ENCODE measurements at regions of chr3 and their contacts with region 1.

Region 1: GRCh38 chr3:99753268-99753975 is 64.2 kb upstream of the CMSS1 start:
- DNase-seq: no peak
- ATAC-seq: peak; percentile 77 to 78
- H3K4me3 ChIP-seq: no peak overlapping the region
- H3K27ac ChIP-seq: no peak overlapping the region
- H3K4me1 ChIP-seq: no peaks in the 10 kb centered on the region
- H3K27me3 ChIP-seq: no peaks in the 10 kb centered on the region
- CTCF ChIP-seq: peak; percentile 66

Region 2: GRCh38 chr3:99023590-99024192 is 729.7 kb before region 1 on chr3:
- intact Hi-C with region 1: loop called (anchors 10 kb)
- DNase-seq: no peak
- ATAC-seq: peak in 1 of 2 donors; percentile 49
- H3K4me3 ChIP-seq: no peak overlapping the region
- H3K27ac ChIP-seq: no peak overlapping the region
- H3K4me1 ChIP-seq: no peaks in the 10 kb centered on the region
- H3K27me3 ChIP-seq: no peaks in the 10 kb centered on the region
- CTCF ChIP-seq: peak; percentile 60

Region 3: DNA sequence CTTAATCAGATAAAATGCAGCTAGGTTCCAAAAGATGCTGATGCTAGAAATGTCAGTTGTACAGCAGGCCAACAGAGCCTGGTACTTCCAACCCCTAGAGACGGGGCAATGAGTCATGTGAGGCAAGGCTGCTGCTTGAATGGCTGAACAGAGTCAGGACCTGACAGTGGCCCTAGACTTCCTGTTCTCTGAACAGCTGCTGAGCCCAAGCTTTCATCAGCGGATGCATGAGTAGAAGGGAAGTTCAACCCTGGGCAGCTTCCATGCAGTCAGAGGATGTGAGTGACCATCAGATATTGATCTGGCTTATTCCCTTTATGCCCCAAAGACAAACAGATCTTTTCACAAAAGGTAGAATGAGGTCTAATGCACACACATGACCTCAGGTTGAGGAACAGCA is 398.0 kb before region 1 on chr3:
- intact Hi-C with region 1: no loop called
- DNase-seq: no peak
- ATAC-seq: no peak
- H3K4me3 ChIP-seq: no peak overlapping the region
- H3K27ac ChIP-seq: no peak overlapping the region
- H3K4me1 ChIP-seq: no peaks in the 10 kb centered on the region
- H3K27me3 ChIP-seq: no peaks in the 10 kb centered on the region
- CTCF ChIP-seq: no peak

Region 4: GRCh38 chr3:100136921-100137320 is 383.5 kb after region 1 on chr3:
- intact Hi-C with region 1: no loop called
- DNase-seq: no peak
- ATAC-seq: peak in 1 of 2 donors; percentile 29
- H3K4me3 ChIP-seq: no peak overlapping the region
- H3K27ac ChIP-seq: no peak overlapping the region
- H3K4me1 ChIP-seq: no peaks in the 10 kb centered on the region
- H3K27me3 ChIP-seq: no peaks in the 10 kb centered on the region
- CTCF ChIP-seq: no peak

Measured in lower lobe of right lung (tissue), 2 donors.